ENCODE measurements at regions of chr15 and their contacts with region 1.

Region 1: GRCh38 chr15:40982855-40983254 is 29.6 kb downstream of the CHAC1 start:
- DNase-seq: peak; percentile 88 to 90
- ATAC-seq: peak; percentile 63
- H3K4me3 ChIP-seq: no peak overlapping the region
- H3K27ac ChIP-seq: peak overlapping the region; percentile 72 to 84
- H3K4me1 ChIP-seq: peaks cover 7 to 8% of the 10 kb centered on the region in 2 donors
- H3K27me3 ChIP-seq: no peaks in the 10 kb centered on the region

Region 2: DNA sequence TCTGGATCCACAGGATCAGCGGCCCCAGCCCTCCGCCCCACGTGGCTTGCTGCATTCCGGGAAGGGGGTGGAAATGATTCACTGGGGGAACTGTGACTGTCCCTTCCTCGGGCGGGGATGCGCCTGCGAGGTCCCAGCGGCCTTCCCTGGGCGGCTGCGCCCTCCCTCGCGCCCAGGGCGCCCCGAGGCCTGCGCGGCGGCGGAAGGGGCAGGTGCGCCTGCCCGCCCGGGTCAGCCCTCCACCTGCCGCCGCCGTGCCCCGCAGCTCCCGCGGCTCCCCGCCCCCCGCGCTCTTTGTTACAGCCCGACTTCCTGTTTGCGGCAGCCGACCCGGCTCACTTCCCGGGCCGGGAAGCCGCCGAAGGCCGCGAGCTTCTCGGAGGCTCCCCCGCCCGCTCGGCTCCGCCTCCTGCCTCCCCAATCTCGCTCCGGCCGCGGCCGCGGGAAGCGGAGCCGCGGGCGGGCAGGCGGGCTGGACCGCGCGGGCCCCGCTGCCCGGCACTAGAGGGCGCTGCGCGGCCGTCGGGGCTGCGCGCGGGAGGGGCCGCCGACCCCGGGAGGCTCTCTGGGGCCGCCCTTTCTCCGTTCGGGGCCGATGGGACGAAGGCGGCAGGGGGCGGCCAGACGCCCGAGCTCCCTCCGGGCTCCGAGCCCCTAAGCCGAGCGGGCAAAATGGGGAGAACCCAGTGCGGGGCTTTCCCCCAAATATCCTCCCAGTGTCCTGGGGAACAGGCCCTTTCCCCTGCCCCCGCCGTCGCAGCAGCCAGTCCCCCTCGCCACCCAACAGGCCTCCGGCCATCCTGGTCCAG is 41.1 kb before region 1 on chr15:
- intact Hi-C with region 1: loop called in 1 of 2 experiments (anchors 5 kb)
- DNase-seq: peak; percentile 86 to 93
- ATAC-seq: peak; percentile 91
- H3K4me3 ChIP-seq: peak overlapping the region; percentile 40 to 48
- H3K27ac ChIP-seq: peak overlapping the region; percentile 44 to 79
- H3K4me1 ChIP-seq: no peaks in the 10 kb centered on the region
- H3K27me3 ChIP-seq: no peaks in the 10 kb centered on the region

Region 3: DNA sequence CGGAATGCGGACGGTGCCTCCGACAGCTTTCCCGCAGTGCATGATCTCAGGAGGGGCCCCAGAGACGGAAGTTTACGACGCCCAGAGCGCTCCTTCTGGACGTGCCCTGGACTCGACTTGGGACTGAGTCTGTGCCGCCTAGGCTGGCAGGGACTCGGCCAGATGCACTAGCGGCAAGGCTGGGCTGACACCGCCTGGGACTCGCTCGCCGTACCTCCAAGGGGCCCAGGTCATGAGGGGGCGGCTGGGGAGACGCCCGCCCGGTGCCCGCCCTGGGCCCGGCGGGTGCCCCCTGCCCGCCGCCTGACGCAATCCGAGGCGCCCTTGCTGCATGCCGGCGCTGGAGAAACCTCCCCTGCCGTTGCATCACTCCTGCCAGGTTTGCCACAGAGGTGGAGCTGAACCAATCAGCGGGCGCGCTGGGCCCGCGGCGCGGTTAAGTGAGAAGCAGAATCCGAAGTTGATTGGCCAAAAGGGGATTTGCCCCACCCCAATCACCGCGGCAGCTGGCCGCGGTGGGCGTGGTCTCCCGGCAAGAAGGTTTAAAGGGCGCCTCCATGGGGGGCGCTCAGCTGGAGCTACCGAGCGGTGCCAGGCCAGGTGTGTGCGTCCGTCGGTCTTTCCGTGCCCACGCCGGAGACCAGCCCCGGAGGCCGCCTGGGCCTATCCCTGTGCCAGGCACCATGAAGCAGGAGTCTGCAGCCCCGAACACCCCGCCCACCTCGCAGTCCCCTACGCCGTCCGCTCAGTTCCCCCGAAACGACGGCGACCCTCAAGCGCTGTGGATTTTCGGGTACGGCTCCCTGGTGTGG is 29.7 kb before region 1 on chr15 and contains the start of gene CHAC1:
- intact Hi-C with region 1: loop called in 1 of 2 experiments (anchors 5 kb)
- DNase-seq: peak; percentile 97 to 98
- ATAC-seq: peak; percentile 92
- H3K4me3 ChIP-seq: peak within 1 kb of the TSS; percentile 38 to 87
- H3K27ac ChIP-seq: peak within 1 kb of the TSS in 1 of 2 donors; percentile 81
- H3K4me1 ChIP-seq: peaks cover 0 to 4% of the 10 kb centered on the region in 2 donors
- H3K27me3 ChIP-seq: no peaks in the 10 kb centered on the region
- total RNA-seq, gene CHAC1: 2.1 to 5.3 TPM

Region 4: GRCh38 chr15:41022487-41023090 is 39.7 kb after region 1 on chr15:
- intact Hi-C with region 1: loop called (anchors 2 to 5 kb)
- DNase-seq: peak in 1 of 2 donors; percentile 47
- ATAC-seq: peak; percentile 71
- H3K4me3 ChIP-seq: no peak overlapping the region
- H3K27ac ChIP-seq: peak overlapping the region in 1 of 2 donors; percentile 78
- H3K4me1 ChIP-seq: peaks cover 2 to 5% of the 10 kb centered on the region in 2 donors
- H3K27me3 ChIP-seq: no peaks in the 10 kb centered on the region

Measured in aorta (tissue), 5 donors.